ENCODE measurements at regions of chr13 and their contacts with region 1.

Region 1: DNA sequence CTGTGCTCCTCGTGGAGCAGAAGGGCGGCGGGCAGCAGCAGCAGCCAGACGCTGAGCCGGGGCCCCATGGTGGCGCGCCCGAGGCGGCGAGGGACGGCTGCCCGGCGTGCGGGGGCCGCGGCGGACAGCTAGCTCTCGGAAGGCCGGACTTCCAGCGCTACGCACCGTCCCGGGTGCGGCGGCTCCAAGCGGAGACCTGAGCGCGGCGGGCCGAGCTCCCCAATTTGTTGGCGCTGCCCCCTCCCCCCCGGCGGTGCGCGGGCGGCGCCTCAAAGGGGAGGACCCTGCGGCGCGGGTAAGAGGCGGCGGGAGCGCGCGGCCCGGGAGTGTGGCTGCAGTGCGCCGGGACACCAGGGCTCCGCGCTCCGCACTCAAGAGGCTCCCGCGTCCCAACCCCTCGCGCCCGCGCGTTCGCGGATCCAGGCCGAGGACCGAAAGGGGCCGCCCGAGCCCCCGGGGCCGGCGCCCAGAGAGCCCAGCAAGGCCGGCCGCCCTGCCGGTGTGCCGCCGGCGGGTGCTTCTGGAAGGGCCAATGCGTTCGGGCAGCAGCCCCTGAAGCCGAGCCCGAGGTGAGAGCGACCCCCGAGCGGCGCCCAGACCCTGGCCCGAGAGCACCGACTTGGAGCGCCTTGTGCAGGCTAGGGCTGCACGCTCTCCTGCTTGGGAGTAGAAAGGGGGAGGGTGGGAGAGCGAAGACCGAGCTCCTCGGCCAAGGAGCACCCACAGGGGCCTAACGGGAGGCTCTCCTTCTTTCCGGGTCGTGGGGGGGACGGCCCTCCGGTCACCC is at the starts of genes COL4A1 and COL4A2:
- DNase-seq: peak; percentile 83
- H3K4me3 ChIP-seq: peak within 1 kb of the TSS; percentile 98
- H3K27ac ChIP-seq: peak within 1 kb of the TSS; percentile 91
- H3K4me1 ChIP-seq: peaks cover 42% of the 10 kb centered on the region
- H3K27me3 ChIP-seq: no peaks in the 10 kb centered on the region
- CTCF ChIP-seq: no peak
- total RNA-seq, gene COL4A1: 83.9 and 86.0 TPM in 2 replicates
- total RNA-seq, gene COL4A2: 184 and 193 TPM in 2 replicates

Region 2: DNA sequence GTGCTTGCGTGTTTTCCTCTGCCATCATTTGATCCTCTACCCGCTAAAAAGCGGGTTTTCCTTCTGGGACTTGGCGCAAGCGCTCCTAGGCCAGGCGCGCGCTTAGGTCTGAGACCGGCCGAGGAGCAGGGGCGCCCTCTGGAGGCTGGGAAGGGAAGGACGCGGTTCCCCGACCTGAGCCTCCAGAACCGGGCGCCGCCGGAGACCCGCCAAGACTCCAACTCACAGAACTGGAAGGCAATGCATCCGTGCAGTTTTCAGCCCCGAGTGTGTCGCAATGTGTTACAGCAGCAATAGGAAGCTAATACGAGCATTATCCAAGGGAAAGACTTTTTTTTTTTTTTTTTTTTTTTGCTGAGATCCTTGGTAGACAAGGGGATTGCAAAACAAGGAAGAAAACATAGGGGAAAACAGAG is 191.1 kb before region 1 on chr13:
- CTCF ChIA-PET with region 1: no interaction called
- POLR2A ChIA-PET with region 1: no interaction called
- intact Hi-C with region 1: no loop called
- DNase-seq: peak; percentile 30
- H3K4me3 ChIP-seq: no peak overlapping the region
- H3K27ac ChIP-seq: no peak overlapping the region
- H3K4me1 ChIP-seq: no peaks in the 10 kb centered on the region
- H3K27me3 ChIP-seq: peaks cover 4% of the 10 kb centered on the region
- CTCF ChIP-seq: peak; percentile 71

Region 3: DNA sequence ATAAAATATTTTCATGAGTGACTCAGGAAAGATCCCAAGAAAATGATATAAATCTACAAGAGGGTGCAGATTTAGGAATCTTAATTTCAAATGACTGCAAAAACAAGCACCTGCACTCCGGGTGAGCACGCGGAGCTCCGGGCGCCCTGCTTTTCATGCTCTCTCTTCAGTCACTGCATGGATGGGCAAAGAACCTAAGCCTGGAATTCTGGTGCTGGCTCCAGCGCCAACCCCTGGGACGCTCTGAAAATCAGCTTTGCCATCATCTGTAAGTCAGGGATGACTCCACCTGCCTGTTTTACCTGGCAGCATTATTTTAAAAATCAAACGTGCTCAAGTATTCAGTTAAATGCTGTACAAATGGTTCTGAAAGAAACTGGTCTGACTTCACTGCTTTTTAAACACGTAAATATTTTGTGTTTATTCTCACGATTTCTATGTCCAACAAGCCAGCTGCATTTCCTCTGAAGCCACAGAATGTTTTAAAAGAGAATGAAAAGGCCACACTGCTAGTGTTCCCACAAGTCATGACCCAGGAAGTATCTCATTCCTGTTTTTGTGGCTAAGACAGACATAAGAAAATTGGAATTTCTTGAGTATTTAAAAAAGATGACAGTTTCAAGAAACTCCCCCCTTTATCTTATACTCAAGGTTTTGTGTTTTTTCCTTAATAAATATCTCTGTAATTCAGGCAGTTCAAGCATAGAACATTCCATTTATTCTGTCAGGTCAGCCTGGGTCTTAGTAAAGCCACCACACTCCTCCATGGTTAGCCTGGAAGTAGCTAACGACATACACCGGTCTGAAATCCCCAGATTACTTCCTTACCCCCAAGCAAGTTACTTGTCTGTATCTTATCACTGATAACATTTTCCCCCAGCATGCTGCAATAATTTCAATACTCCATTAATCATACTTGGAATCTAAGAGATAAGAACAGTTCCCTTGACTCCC is 81.3 kb before region 1 on chr13:
- CTCF ChIA-PET with region 1: no interaction called
- POLR2A ChIA-PET with region 1: no interaction called
- intact Hi-C with region 1: loop called (anchors 2 kb)
- DNase-seq: no peak
- H3K4me3 ChIP-seq: no peak overlapping the region
- H3K27ac ChIP-seq: no peak overlapping the region
- H3K4me1 ChIP-seq: peaks cover 30% of the 10 kb centered on the region
- H3K27me3 ChIP-seq: no peaks in the 10 kb centered on the region
- CTCF ChIP-seq: no peak

Region 4: GRCh38 chr13:110361365-110361911 is 54.3 kb after region 1 on chr13:
- CTCF ChIA-PET with region 1: no interaction called
- POLR2A ChIA-PET with region 1: no interaction called
- intact Hi-C with region 1: loop called (anchors 5 kb)
- DNase-seq: no peak
- H3K4me3 ChIP-seq: no peak overlapping the region
- H3K27ac ChIP-seq: no peak overlapping the region
- H3K4me1 ChIP-seq: peaks cover 21% of the 10 kb centered on the region
- H3K27me3 ChIP-seq: no peaks in the 10 kb centered on the region
- CTCF ChIP-seq: no peak